ENCODE measurements at regions of chr16 and their contacts with region 1.

Region 1: GRCh38 chr16:66608241-66609138 is 4.0 kb downstream of the CMTM3 start:
- DNase-seq: peak; percentile 74 to 96 (median 88)
- ATAC-seq: peak; percentile 75
- H3K4me3 ChIP-seq: no peak overlapping the region
- H3K27ac ChIP-seq: peak overlapping the region in 1 of 2 donors; percentile 15
- H3K4me1 ChIP-seq: peaks cover 9 to 44% of the 10 kb centered on the region in 2 donors
- H3K27me3 ChIP-seq: peaks cover 0 to 13% of the 10 kb centered on the region in 2 donors
- CTCF ChIP-seq: peak; percentile 88 to 93

Region 2: GRCh38 chr16:66406534-66407221 is 201.8 kb before region 1 on chr16:
- intact Hi-C with region 1: loop called in 1 of 2 experiments (anchors 5 kb)
- DNase-seq: peak; percentile 82 to 94 (median 83)
- ATAC-seq: peak; percentile 94
- H3K4me3 ChIP-seq: peak overlapping the region; percentile 40 to 46
- H3K27ac ChIP-seq: peak overlapping the region in 1 of 2 donors; percentile 71
- H3K4me1 ChIP-seq: peaks cover 13 to 28% of the 10 kb centered on the region in 2 donors
- H3K27me3 ChIP-seq: peaks cover 0 to 21% of the 10 kb centered on the region in 2 donors
- CTCF ChIP-seq: peak; percentile 88 to 95

Region 3: DNA sequence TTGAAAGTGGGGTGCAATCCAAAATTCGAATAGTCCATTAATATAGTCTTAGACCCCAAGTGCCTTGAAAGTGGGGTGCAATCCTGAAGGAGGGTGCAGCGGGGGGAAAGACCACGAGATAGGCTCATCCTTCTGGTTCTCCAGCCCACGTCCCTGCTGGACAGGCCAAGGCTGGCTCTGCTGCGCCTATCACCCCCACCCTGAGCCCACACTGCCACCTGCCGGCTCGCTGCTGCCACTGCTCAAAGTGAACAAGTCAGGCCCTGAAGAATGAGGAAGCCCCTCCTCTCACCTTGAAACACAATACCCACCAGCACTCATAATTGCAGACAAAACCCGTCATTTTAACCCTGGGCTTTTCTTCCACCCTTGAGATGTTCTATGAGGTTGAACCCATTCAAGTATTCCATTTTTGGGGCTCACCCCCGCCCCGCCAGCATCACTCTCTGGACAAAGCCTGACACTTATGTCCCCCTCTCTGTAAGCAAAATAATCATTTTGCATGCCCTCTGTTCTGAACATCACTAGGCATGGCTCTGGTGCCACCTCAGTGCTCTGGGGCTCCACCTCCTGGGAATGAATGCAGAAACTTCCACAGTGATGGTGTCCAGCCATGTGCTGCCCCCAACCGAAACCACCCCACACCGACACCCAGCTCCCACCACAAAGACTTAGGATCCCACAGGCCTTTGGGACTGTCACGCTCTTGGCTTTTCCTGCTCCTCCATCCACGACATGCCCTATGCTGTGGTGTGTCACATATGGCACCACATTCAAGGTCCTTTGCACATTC is 124.6 kb before region 1 on chr16:
- intact Hi-C with region 1: loop called in 1 of 2 experiments (anchors 10 kb)
- DNase-seq: peak; percentile 67 to 97 (median 86)
- ATAC-seq: peak; percentile 86
- H3K4me3 ChIP-seq: no peak overlapping the region
- H3K27ac ChIP-seq: no peak overlapping the region
- H3K4me1 ChIP-seq: peaks cover 11 to 33% of the 10 kb centered on the region in 2 donors
- H3K27me3 ChIP-seq: no peaks in the 10 kb centered on the region
- CTCF ChIP-seq: peak; percentile 84 to 93